Endothelial cell of umbilical vein (primary cell): ENCODE measurements at regions of chr2 and their contacts with region 1.

Region 1: GRCh38 chr2:88880441-88880953 is 189.0 kb downstream of the RPIA start:
- DNase-seq: peak; percentile 63
- H3K4me3 ChIP-seq: no peak overlapping the region
- H3K27ac ChIP-seq: no peak overlapping the region
- H3K4me1 ChIP-seq: no peaks in the 10 kb centered on the region
- H3K27me3 ChIP-seq: peaks cover 10 to 40% of the 10 kb centered on the region in 2 experiments
- CTCF ChIP-seq: peak; percentile 65 to 68
- POLR2A ChIP-seq: no peak

Region 2: DNA sequence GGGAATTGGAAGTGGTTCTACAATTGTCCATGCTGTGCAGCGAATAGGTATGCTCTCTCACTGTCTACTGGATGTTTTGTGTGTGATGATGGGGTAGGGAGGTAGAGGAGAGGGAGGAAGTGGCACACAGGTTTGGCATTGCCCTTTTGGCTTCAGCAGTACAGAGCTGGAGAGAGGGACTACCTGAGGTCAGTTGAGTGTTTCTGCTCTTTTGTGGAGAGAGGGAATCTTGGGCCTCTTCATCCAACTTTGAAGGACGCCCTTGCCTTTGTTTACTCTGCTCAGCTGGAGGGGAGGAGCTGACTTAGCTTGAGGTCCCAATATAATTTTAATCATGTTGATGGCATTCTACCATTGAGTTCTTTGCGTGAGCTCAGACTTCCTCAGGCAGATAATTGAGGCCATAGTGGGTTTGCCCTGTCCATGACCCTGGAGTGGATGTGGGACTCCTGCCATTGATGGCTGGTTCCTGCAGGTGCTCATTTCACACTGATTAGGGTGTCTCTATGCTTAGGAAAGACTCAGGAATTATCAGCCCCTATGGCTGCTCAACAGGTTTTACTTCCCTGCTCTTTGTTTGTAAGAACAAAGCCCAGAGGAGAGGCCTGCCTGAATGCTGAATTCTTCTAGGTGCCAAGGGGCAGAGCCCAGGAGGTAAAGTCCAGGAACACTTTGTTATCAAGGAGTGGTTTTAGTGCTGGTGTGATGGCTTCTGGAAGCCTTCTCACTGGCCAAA is 181.8 kb before region 1 on chr2:
- CTCF ChIA-PET with region 1: no interaction called
- POLR2A ChIA-PET with region 1: no interaction called
- dilution Hi-C with region 1: no loop called
- intact Hi-C with region 1: no loop called
- DNase-seq: no peak
- H3K4me3 ChIP-seq: no peak overlapping the region
- H3K27ac ChIP-seq: no peak overlapping the region
- H3K4me1 ChIP-seq: peaks cover 5% of the 10 kb centered on the region
- H3K27me3 ChIP-seq: no peaks in the 10 kb centered on the region
- CTCF ChIP-seq: no peak
- POLR2A ChIP-seq: no peak

Region 3: GRCh38 chr2:88739985-88740600 is 140.4 kb before region 1 on chr2:
- CTCF ChIA-PET with region 1: interaction called, 32 read pairs
- POLR2A ChIA-PET with region 1: no interaction called
- dilution Hi-C with region 1: no loop called
- intact Hi-C with region 1: no loop called
- DNase-seq: peak; percentile 82
- H3K4me3 ChIP-seq: no peak overlapping the region
- H3K27ac ChIP-seq: peak overlapping the region; percentile 16
- H3K4me1 ChIP-seq: peaks cover 31% of the 10 kb centered on the region
- H3K27me3 ChIP-seq: no peaks in the 10 kb centered on the region
- CTCF ChIP-seq: peak; percentile 85 to 87
- POLR2A ChIP-seq: no peak

Region 4: DNA sequence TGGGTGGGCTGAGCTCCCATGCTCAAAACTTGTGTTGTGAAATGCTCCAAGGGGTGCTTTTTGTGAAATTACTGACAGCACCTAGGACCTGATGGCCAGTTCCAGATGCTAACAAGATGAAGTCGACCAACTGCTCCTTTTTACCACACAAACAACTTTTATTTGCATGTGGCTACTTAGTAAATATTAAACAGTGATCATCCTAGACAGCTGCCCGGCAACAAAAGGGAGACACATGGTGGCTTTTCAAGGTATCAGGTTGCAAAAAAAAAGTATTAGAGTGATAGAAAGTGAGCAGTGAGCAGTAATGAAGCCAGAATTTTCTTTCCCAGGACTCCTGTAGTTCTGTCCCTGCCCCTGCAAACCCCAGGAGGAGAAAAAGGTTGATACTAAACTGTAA is 70.5 kb before region 1 on chr2:
- CTCF ChIA-PET with region 1: interaction called, 27 read pairs
- POLR2A ChIA-PET with region 1: no interaction called
- dilution Hi-C with region 1: no loop called
- intact Hi-C with region 1: no loop called
- DNase-seq: no peak
- H3K4me3 ChIP-seq: no peak overlapping the region
- H3K27ac ChIP-seq: no peak overlapping the region
- H3K4me1 ChIP-seq: peaks cover 3% of the 10 kb centered on the region
- H3K27me3 ChIP-seq: peaks cover 0 to 9% of the 10 kb centered on the region in 2 experiments
- CTCF ChIP-seq: no peak
- POLR2A ChIP-seq: no peak

Region 5: DNA sequence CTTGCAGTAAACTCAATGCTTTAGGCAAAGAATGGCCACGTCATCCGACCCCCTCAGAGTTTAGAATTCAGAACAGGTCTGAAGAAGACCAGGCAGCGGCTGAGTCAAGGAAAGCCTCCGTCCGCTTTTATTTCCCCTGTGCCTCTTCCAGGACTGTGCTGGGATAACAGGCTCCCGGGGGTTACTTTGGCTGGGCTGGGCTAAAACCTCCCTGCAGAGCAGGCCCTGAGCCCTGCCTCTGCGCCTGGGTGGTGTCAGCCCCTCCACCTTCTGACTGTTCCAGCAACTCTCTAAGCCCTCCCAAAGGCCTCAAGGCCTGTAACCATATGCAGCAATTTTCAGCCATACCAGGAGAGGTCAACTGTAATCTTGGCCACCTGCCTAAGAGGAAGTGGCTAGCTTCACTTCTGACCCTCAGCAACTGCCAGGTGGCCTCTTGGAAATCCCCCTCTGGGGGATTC is 22.5 kb before region 1 on chr2:
- CTCF ChIA-PET with region 1: interaction called, 50 read pairs
- POLR2A ChIA-PET with region 1: no interaction called
- dilution Hi-C with region 1: no loop called
- intact Hi-C with region 1: no loop called
- DNase-seq: peak; percentile 83
- H3K4me3 ChIP-seq: no peak overlapping the region
- H3K27ac ChIP-seq: no peak overlapping the region
- H3K4me1 ChIP-seq: peaks cover 6% of the 10 kb centered on the region
- H3K27me3 ChIP-seq: peaks cover 1 to 10% of the 10 kb centered on the region in 2 experiments
- CTCF ChIP-seq: no peak
- POLR2A ChIP-seq: no peak

Region 6: DNA sequence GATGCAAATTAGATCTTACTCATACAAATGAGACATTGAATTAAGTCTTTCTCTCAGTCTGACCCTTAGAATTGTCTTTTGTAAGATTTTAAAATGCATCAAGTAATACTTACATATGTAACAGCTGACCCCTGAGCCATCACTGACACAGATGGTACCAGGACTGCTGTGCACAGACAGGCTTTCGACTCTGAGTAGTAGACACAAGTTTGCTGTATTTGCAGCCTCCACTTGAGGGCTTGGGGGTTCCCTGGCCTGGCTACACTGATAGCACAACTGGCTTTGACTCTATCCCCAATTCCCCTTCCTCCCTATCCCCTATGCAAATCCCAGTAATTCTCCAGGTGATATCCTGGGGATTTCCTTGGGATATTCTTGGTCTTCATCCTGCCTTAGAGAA is 11.7 kb after region 1 on chr2:
- CTCF ChIA-PET with region 1: interaction called, 42 read pairs
- POLR2A ChIA-PET with region 1: no interaction called
- dilution Hi-C with region 1: no loop called
- intact Hi-C with region 1: no loop called
- DNase-seq: no peak
- H3K4me3 ChIP-seq: no peak overlapping the region
- H3K27ac ChIP-seq: no peak overlapping the region
- H3K4me1 ChIP-seq: no peaks in the 10 kb centered on the region
- H3K27me3 ChIP-seq: peaks cover 0 to 9% of the 10 kb centered on the region in 2 experiments
- CTCF ChIP-seq: no peak
- POLR2A ChIP-seq: no peak

Region 7: GRCh38 chr2:88903749-88904353 is 23.4 kb after region 1 on chr2:
- CTCF ChIA-PET with region 1: interaction called, 22 read pairs
- POLR2A ChIA-PET with region 1: no interaction called
- dilution Hi-C with region 1: no loop called
- intact Hi-C with region 1: no loop called
- DNase-seq: peak; percentile 32
- H3K4me3 ChIP-seq: no peak overlapping the region
- H3K27ac ChIP-seq: no peak overlapping the region
- H3K4me1 ChIP-seq: no peaks in the 10 kb centered on the region
- H3K27me3 ChIP-seq: peaks cover 2 to 11% of the 10 kb centered on the region in 2 experiments
- CTCF ChIP-seq: peak; percentile 49 to 63
- POLR2A ChIP-seq: no peak

Region 8: DNA sequence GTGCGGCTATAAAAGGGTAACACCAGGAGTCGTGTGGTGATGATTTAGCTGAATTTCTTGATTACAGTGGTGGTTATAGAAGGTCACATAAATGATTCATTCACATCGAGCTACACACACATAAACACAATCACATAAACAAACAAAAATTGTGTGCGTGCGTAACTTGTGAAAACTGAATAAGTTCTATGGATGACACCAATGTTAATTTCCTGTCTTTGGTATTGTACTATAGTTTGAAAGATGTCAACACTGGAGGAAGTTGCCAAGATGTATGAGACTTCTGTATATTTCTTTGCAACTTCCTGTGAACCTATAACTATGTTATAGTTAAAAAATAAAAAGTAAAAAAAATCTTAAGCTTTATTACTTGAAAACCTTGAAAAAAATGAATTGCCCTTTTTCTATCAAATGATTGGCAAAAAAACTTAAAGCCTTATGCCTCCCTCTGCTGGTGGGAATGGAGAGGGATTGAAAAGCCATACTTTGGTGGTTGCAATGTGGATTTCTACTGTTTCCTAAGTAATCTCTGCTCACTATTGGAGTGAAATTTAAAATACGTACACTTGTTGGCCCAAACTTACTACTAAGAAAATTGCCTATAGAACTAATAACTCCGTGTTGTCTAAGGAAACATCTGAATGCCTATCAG is 38.7 kb after region 1 on chr2:
- CTCF ChIA-PET with region 1: interaction called, 33 read pairs
- POLR2A ChIA-PET with region 1: no interaction called
- dilution Hi-C with region 1: no loop called
- intact Hi-C with region 1: no loop called
- DNase-seq: peak; percentile 29
- H3K4me3 ChIP-seq: no peak overlapping the region
- H3K27ac ChIP-seq: no peak overlapping the region
- H3K4me1 ChIP-seq: no peaks in the 10 kb centered on the region
- H3K27me3 ChIP-seq: peaks cover 5 to 13% of the 10 kb centered on the region in 2 experiments
- CTCF ChIP-seq: peak; percentile 46 to 49
- POLR2A ChIP-seq: no peak